Prostate gland (tissue), 2 donors: ENCODE measurements at regions of chr18 and their contacts with region 1.

Region 1: DNA sequence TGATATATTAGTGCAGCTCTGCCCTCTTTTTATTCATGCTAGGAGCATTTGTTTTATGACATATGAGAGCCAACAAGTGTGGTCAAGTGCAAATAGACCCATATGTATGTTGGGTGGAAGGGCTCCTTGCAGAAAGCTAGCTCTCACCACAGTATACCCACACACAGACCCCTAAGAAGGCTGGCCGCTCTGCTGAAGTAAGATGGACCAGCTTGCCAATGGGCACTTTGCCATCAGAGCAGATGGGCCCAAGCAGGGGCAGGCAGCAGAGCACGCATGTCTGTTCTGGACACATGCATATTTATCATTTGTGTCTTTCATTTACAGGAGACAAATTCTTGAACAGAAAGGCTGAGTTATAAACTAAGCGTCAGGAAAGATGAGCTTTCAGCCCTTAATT is 187.5 kb upstream of the DTNA start:
- DNase-seq: no peak
- H3K4me3 ChIP-seq: no peak overlapping the region
- H3K27ac ChIP-seq: no peak overlapping the region
- H3K4me1 ChIP-seq: no peaks in the 10 kb centered on the region
- H3K27me3 ChIP-seq: no peaks in the 10 kb centered on the region
- CTCF ChIP-seq: no peak
- POLR2A ChIP-seq: no peak

Region 2: GRCh38 chr18:34583895-34584294 is 61.3 kb after region 1 on chr18:
- intact Hi-C with region 1: loop called (anchors 10 kb)
- DNase-seq: no peak
- H3K4me3 ChIP-seq: no peak overlapping the region
- H3K27ac ChIP-seq: no peak overlapping the region
- H3K4me1 ChIP-seq: no peaks in the 10 kb centered on the region
- H3K27me3 ChIP-seq: no peaks in the 10 kb centered on the region
- CTCF ChIP-seq: no peak
- POLR2A ChIP-seq: no peak